ENCODE measurements at regions of chr2 and their contacts with region 1.

Region 1: DNA sequence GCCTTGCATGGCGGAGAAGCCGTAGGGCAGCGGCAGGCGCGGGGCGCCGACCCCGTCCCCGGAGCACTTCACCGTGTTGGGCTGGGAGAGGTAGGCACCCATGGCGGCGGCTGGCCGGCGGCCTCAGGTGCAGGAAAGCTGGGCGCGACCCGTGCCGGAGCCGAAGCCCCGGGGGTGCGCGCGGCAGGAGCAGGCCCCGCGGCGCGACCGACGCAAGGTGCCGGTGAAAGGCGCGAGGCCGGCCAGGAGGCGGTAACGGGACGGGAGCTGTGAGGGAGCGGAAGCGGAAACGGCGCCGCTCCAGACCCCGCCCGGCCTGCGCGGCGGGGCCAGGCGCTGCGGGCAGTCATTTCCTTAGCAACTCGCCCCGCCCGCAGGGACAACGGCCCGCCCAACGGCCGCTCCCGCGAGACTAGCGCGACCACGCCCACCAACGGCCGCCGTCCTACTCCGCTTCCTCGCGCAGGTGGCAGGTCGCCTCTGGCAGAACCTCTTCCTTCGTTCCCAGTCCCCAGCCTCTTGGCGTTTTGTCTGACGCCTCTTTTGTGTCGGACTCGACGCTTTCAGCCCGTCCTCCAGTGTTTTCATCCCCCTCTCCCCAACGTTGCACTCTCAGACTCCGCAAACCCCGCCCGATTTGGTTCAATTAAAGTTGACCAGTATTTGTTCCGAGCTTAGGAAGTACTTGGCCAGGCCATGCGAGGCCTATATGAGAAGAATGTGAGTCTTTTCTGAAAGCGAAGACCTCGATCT is at the start of gene PPM1G:
- DNase-seq: peak; percentile 95 to 98 (median 96)
- ATAC-seq: peak; percentile 99 to 100 (median 100)
- H3K4me3 ChIP-seq: peak within 1 kb of the TSS; percentile 69 to 100 (median 98)
- H3K27ac ChIP-seq: peak within 1 kb of the TSS; percentile 11 to 96 (median 90)
- H3K4me1 ChIP-seq: peaks cover 0 to 33% (median 20%) of the 10 kb centered on the region in 12 donors
- H3K27me3 ChIP-seq: no peaks in the 10 kb centered on the region
- CTCF ChIP-seq: peak in 1 of 12 donors; percentile 13
- POLR2A ChIP-seq: peak in 1 of 2 donors; percentile 72
- total RNA-seq, gene PPM1G: 31.7 to 49.7 (median 40.2) TPM

Region 2: DNA sequence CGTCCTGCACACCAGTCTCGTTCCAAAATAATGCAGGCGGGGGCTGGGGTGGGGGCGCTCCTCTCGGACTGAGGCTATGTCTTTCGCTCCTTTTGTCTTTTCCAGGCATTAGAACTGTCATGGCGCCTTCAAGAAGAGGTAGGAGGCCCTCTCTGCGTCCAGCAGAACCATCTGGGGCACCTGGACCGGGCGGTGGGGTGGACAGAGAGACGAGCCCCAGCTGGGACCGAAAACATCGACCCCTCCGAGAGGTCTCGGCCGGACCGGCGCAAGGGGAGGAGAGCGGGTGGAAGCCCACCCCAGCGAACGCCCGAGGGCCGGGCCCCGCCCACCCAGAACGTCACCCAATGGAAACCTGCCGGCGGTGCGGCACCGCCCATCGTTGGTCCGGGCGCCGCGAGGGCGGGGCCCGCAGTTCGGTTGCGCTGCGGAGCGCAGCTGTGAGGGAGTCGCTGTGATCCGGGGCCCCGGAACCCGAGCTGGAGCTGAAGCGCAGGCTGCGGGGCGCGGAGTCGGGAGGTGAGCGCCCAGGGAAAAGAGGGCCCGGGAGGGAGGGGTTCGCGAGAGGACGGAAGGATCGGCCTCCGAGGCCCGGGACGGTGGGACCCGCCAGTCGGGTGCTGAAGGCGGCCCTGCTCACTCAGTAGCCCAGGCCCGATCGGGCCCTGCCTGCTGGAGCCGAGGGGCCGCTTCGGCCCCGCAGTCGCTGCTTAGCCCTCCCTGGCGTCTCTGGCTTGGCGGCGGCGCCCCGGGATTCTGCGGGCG is 18.9 kb after region 1 on chr2 and contains the start of gene NRBP1:
- intact Hi-C with region 1: loop called in 8 of 10 experiments (anchors 1 to 2 kb)
- DNase-seq: peak; percentile 92 to 98 (median 95)
- ATAC-seq: peak; percentile 96 to 98 (median 96)
- H3K4me3 ChIP-seq: peak within 1 kb of the TSS; percentile 60 to 100 (median 96)
- H3K27ac ChIP-seq: peak within 1 kb of the TSS; percentile 93 to 100 (median 98)
- H3K4me1 ChIP-seq: peaks cover 4 to 46% (median 31%) of the 10 kb centered on the region in 12 donors
- H3K27me3 ChIP-seq: no peaks in the 10 kb centered on the region
- CTCF ChIP-seq: peak in 1 of 12 donors; percentile 3
- POLR2A ChIP-seq: peak; percentile 4 to 91
- total RNA-seq, gene NRBP1: 43.5 to 78.6 (median 62.8) TPM

Region 3: GRCh38 chr2:27446057-27446456 is 36.6 kb after region 1 on chr2:
- intact Hi-C with region 1: no loop called
- DNase-seq: no peak
- ATAC-seq: no peak
- H3K4me3 ChIP-seq: no peak overlapping the region
- H3K27ac ChIP-seq: no peak overlapping the region
- H3K4me1 ChIP-seq: peaks cover 0 to 7% (median 0%) of the 10 kb centered on the region in 12 donors
- H3K27me3 ChIP-seq: no peaks in the 10 kb centered on the region
- CTCF ChIP-seq: no peak
- POLR2A ChIP-seq: no peak

Region 4: GRCh38 chr2:27703638-27704341 is 294.3 kb after region 1 on chr2:
- intact Hi-C with region 1: no loop called
- DNase-seq: peak; percentile 74 to 83 (median 79)
- ATAC-seq: peak; percentile 48 to 66 (median 56)
- H3K4me3 ChIP-seq: no peak overlapping the region
- H3K27ac ChIP-seq: peak overlapping the region in 2 of 12 donors; percentile 8 to 82
- H3K4me1 ChIP-seq: peaks cover 0 to 42% (median 26%) of the 10 kb centered on the region in 12 donors
- H3K27me3 ChIP-seq: no peaks in the 10 kb centered on the region
- CTCF ChIP-seq: peak; percentile 89 to 97 (median 94)
- POLR2A ChIP-seq: no peak

Measured in heart left ventricle (tissue), 16 donors.